ENCODE measurements at regions of chr5 and their contacts with region 1.

Region 1: DNA sequence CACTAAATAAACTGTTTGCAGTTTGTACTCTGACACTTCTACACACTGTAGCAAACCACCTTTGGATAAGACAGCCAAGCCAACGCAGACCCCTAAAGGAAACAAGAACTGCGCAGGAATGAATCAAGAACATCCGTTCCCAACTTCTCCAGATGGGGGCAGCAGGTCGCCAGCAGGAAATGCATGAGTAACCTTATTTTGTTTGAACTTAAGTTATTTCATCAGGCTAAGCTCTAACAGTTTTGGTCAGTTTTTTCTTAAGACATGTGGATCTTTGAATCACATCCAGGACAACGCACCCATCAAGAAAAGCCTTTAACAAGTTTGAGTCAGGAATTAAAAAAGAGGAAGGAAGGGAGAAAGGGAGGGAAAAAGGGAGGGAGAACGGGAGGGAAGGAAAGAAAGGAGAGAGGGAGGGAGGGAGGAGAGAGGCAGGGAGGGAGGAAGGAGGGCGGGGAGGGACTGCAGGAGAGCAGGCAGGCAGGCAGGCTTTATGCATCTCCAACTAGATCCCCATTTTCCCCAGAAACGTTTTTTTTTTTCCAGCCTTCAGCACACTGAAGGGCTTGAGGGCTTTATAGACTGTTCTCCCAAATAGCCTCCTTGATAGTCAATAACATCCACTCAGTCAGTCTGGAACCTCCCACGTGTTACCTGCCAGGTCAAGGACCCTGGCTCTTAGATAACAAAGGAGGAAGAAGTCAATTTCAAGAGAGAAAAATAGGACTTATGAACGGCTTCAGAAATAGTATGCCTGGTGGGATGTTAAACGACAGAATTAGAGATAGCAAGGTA is 22.2 kb downstream of the BHMT start:
- DNase-seq: peak; percentile 65
- ATAC-seq: peak; percentile 70
- H3K4me3 Mint-ChIP-seq: peak overlapping the region; percentile 84
- H3K27ac Mint-ChIP-seq: peak overlapping the region; percentile 86
- H3K4me1 Mint-ChIP-seq: peaks cover 12% of the 10 kb centered on the region
- H3K27me3 Mint-ChIP-seq: peaks cover 9% of the 10 kb centered on the region

Region 2: GRCh38 chr5:78908173-78909061 is 225.4 kb before region 1 on chr5:
- POLR2A ChIA-PET with region 1: no interaction called
- DNase-seq: no peak
- ATAC-seq: no peak
- H3K4me3 Mint-ChIP-seq: no peak overlapping the region
- H3K27ac Mint-ChIP-seq: no peak overlapping the region
- H3K4me1 Mint-ChIP-seq: peaks cover 3% of the 10 kb centered on the region
- H3K27me3 Mint-ChIP-seq: no peaks in the 10 kb centered on the region

Region 3: DNA sequence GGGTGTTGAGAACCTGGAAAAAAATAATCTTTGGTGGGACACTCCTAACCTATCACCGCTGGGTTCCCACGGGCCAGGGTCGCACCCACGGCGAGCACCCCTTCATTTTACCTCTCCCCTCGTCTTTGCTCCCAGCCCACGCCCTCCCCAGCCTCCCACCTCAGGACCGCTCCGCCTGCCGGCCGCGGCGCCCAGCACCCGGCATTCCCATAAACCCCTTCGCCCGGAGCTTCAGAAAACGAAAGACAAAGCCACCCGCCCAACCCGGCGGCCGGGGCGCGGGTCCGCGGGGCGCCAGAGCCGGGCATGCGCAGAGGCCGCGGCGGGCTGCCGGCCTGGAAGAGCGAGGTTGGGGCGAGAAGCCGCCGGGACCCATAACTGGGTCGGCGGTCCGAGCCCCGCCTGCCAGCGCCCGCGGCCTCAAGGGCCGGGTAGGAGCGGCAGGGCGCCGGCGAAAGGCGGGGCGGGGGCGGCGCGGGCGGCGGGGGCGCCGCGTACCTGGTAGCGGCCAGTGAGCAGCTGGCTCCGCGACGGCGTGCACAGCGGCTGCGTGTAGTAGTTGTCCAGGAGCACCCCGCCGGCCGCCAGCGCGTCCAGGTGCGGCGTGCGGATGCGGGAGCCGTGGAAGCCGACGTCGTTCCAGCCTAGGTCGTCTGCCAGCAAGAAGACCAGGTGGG is 149.3 kb before region 1 on chr5:
- POLR2A ChIA-PET with region 1: interaction called, 12 read pairs
- DNase-seq: peak; percentile 82
- ATAC-seq: peak; percentile 71
- H3K4me3 Mint-ChIP-seq: peak overlapping the region; percentile 89
- H3K27ac Mint-ChIP-seq: peak overlapping the region; percentile 90
- H3K4me1 Mint-ChIP-seq: peaks cover 31% of the 10 kb centered on the region
- H3K27me3 Mint-ChIP-seq: peaks cover 4% of the 10 kb centered on the region

Region 4: DNA sequence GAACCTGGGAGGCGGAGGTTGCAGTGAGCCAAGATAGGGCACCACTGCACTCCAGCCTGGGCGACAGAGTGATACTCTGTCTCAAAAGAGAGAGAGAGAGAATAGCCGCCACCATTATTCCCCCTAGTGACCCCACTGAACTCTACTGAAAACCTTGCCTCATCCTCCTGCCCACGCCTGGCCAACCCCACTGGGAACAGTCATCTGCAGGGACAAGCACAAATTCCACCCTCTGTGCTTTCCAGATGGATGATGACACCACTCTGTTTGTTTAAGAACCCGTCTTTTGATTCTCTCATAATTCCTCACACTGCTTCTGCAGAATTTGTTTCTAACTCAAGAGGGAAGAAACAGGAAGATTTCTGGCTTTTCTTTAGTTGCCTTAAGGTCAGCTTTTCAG is 52.1 kb before region 1 on chr5:
- POLR2A ChIA-PET with region 1: no interaction called
- DNase-seq: no peak
- ATAC-seq: no peak
- H3K4me3 Mint-ChIP-seq: no peak overlapping the region
- H3K27ac Mint-ChIP-seq: no peak overlapping the region
- H3K4me1 Mint-ChIP-seq: peaks cover 5% of the 10 kb centered on the region
- H3K27me3 Mint-ChIP-seq: peaks cover 16% of the 10 kb centered on the region